Sigmoid colon (tissue), 7 donors: ENCODE measurements at regions of chr10 and their contacts with region 1.

Region 1: GRCh38 chr10:91251430-91252056 is 31.1 kb downstream of the PCGF5 start:
- DNase-seq: peak; percentile 75
- H3K4me3 ChIP-seq: no peak overlapping the region
- H3K27ac ChIP-seq: no peak overlapping the region
- H3K4me1 ChIP-seq: peaks cover 0 to under 1% (median 0%) of the 10 kb centered on the region in 4 donors
- H3K27me3 ChIP-seq: no peaks in the 10 kb centered on the region
- CTCF ChIP-seq: peak; percentile 80 to 92 (median 88)
- EP300 ChIP-seq: no peak
- POLR2A ChIP-seq: no peak

Region 2: DNA sequence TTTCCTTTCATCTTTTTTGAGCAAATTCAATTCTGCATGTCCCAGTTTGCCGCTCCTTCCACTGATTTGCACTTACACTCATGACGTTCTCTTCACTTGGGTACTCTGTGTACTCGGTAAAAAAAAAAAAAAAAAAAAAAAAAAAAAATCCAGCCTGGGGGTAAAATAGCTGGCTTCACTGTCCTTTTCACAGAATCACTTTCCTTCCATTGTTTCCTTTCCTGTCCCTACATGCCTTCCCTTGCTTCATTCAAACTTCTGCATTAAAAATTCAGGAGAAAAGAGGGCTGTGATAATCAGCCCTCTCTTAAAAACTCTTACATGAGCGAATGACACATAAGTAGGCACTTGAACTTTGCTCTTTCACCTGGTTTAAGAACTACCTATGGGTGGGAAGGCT is 339.4 kb before region 1 on chr10:
- intact Hi-C with region 1: loop called (anchors 1 kb)
- DNase-seq: no peak
- H3K4me3 ChIP-seq: no peak overlapping the region
- H3K27ac ChIP-seq: no peak overlapping the region
- H3K4me1 ChIP-seq: peaks cover 0 to 7% (median 2%) of the 10 kb centered on the region in 4 donors
- H3K27me3 ChIP-seq: no peaks in the 10 kb centered on the region
- CTCF ChIP-seq: no peak
- EP300 ChIP-seq: no peak
- POLR2A ChIP-seq: no peak

Region 3: GRCh38 chr10:91006001-91006751 is 245.4 kb before region 1 on chr10:
- intact Hi-C with region 1: loop called (anchors 1 kb)
- DNase-seq: peak; percentile 70
- H3K4me3 ChIP-seq: no peak overlapping the region
- H3K27ac ChIP-seq: no peak overlapping the region
- H3K4me1 ChIP-seq: no peaks in the 10 kb centered on the region
- H3K27me3 ChIP-seq: no peaks in the 10 kb centered on the region
- CTCF ChIP-seq: peak; percentile 59 to 86 (median 82)
- EP300 ChIP-seq: no peak
- POLR2A ChIP-seq: no peak

Region 4: DNA sequence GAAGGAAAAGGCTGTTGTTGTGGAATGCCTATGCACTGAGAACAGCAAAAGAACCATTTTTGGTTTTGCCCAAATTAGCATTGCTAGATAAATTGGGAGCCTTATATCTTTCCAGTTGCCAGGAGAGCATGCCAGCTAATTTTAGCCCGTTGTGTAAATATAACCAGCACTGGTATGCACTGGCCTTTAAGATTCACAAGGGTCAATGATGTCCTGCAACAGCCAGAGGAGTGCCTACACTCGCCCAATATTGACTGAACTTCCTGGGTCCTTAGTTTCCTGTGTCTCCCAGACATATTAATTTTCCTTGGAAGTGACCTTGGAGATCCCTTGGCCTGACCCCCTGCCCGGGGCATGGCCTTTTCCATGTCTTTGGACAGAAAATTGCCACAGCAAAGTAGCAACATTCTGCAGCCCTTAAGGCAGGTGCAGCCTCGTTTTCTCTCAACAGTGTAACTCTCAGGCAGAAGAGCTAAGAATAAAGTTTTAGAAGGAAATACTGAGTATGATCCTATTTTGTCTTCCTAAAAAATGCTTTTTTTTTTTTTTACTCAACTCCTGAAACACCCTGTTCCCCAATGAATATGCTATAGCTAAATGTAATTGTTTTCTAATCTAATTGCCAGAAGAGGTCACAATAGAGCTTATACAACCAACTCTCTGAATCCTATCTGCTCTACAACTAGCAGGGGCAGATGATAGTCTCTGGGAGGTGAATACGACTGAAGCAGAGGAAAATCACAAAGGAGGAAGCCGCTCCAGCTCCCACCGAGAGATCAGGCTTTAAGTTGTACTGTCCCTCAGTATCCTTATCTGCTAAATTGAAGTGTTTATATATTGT is 163.0 kb before region 1 on chr10:
- intact Hi-C with region 1: loop called (anchors 2 kb)
- DNase-seq: no peak
- H3K4me3 ChIP-seq: no peak overlapping the region
- H3K27ac ChIP-seq: peak overlapping the region in 3 of 4 donors; percentile 5 to 16 (median 5)
- H3K4me1 ChIP-seq: peaks cover 0 to 18% (median 15%) of the 10 kb centered on the region in 4 donors
- H3K27me3 ChIP-seq: no peaks in the 10 kb centered on the region
- CTCF ChIP-seq: no peak
- EP300 ChIP-seq: no peak
- POLR2A ChIP-seq: no peak

Region 5: GRCh38 chr10:91298224-91298871 is 46.8 kb after region 1 on chr10:
- intact Hi-C with region 1: no loop called
- DNase-seq: peak; percentile 80
- H3K4me3 ChIP-seq: peak overlapping the region; percentile 9 to 49 (median 36)
- H3K27ac ChIP-seq: peak overlapping the region; percentile 26 to 63 (median 40)
- H3K4me1 ChIP-seq: peaks cover 0 to 12% (median 11%) of the 10 kb centered on the region in 4 donors
- H3K27me3 ChIP-seq: no peaks in the 10 kb centered on the region
- CTCF ChIP-seq: peak; percentile 64 to 90 (median 84)
- EP300 ChIP-seq: no peak
- POLR2A ChIP-seq: no peak